ENCODE measurements at regions of chr2 and their contacts with region 1.

Region 1: GRCh38 chr2:9003616-9004337 is at the start of gene MBOAT2:
- DNase-seq: peak; percentile 84
- H3K4me3 ChIP-seq: peak within 1 kb of the TSS; percentile 82 to 95 (median 85)
- H3K27ac ChIP-seq: peak within 1 kb of the TSS; percentile 74
- H3K4me1 ChIP-seq: peaks cover 40% of the 10 kb centered on the region
- H3K27me3 ChIP-seq: no peaks in the 10 kb centered on the region
- CTCF ChIP-seq: no peak
- total RNA-seq, gene MBOAT2: 14.8 to 103 TPM

Region 2: GRCh38 chr2:8992643-8993042 is 11.1 kb before region 1 on chr2:
- CTCF ChIA-PET with region 1: interaction called, 18 read pairs
- dilution Hi-C with region 1: no loop called
- in situ Hi-C with region 1: no loop called
- intact Hi-C with region 1: no loop called
- DNase-seq: no peak
- H3K4me3 ChIP-seq: no peak overlapping the region
- H3K27ac ChIP-seq: no peak overlapping the region
- H3K4me1 ChIP-seq: peaks cover 8% of the 10 kb centered on the region
- H3K27me3 ChIP-seq: no peaks in the 10 kb centered on the region
- CTCF ChIP-seq: no peak

Region 3: GRCh38 chr2:9071032-9071431 is 67.3 kb after region 1 on chr2:
- CTCF ChIA-PET with region 1: no interaction called
- dilution Hi-C with region 1: no loop called
- in situ Hi-C with region 1: no loop called
- intact Hi-C with region 1: loop called (anchors 5 kb)
- DNase-seq: peak; percentile 99
- H3K4me3 ChIP-seq: no peak overlapping the region
- H3K27ac ChIP-seq: peak overlapping the region; percentile 89
- H3K4me1 ChIP-seq: peaks cover 33% of the 10 kb centered on the region
- H3K27me3 ChIP-seq: no peaks in the 10 kb centered on the region
- CTCF ChIP-seq: no peak

Region 4: GRCh38 chr2:9152975-9153642 is 149.3 kb after region 1 on chr2:
- CTCF ChIA-PET with region 1: no interaction called
- dilution Hi-C with region 1: no loop called
- in situ Hi-C with region 1: no loop called
- intact Hi-C with region 1: no loop called
- DNase-seq: no peak
- H3K4me3 ChIP-seq: no peak overlapping the region
- H3K27ac ChIP-seq: no peak overlapping the region
- H3K4me1 ChIP-seq: peaks cover 9% of the 10 kb centered on the region
- H3K27me3 ChIP-seq: no peaks in the 10 kb centered on the region
- CTCF ChIP-seq: no peak